Psoas muscle (tissue), 8 donors: ENCODE measurements at regions of chr5 and their contacts with region 1.

Region 1: GRCh38 chr5:140244525-140245025 is 58.3 kb downstream of the PFDN1 start:
- DNase-seq: peak; percentile 91 to 95
- ATAC-seq: peak; percentile 54 to 64 (median 58)
- H3K4me3 ChIP-seq: no peak overlapping the region
- H3K27ac ChIP-seq: peak overlapping the region; percentile 88
- H3K4me1 ChIP-seq: peaks cover 87% of the 10 kb centered on the region
- H3K27me3 ChIP-seq: no peaks in the 10 kb centered on the region
- CTCF ChIP-seq: peak; percentile 92

Region 2: DNA sequence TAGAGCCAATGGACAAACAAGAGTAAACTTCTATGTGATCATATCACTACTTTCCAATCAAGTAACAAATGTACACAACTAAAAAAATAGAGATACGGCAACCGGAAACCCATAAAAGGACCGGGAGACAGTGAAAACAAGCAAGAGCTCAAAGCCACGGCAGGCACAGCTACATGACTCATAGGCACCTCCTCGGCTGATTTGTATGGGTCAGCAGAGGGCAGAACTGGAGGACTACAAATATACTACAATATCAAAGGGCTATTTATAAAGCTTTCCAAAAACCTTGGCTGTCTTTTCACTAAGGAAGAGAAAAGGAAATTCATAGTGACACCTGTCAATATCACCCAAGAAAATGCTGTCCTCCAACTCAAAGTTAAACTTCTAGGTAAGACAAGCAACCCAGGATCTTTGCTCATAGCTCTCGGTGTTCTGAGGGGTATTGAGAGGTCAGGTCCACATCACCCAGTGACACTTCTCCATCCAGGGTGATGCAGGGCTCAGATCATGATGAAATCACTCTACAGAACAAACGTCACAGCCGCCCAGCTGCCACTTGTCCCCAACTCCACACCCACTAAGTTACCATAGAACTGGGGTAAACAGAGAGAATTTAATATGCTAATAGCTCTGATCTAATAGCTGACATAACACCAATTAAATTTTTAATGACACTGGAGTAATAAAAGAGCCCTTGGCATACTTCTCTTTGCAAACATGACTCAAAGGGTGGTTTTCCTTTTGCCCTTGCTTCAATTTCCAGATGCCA is 17.0 kb after region 1 on chr5:
- intact Hi-C with region 1: no loop called
- DNase-seq: peak; percentile 60 to 82
- ATAC-seq: peak; percentile 93 to 97 (median 94)
- H3K4me3 ChIP-seq: peak overlapping the region; percentile 35
- H3K27ac ChIP-seq: peak overlapping the region; percentile 92
- H3K4me1 ChIP-seq: peaks cover 40% of the 10 kb centered on the region
- H3K27me3 ChIP-seq: no peaks in the 10 kb centered on the region
- CTCF ChIP-seq: no peak

Region 3: DNA sequence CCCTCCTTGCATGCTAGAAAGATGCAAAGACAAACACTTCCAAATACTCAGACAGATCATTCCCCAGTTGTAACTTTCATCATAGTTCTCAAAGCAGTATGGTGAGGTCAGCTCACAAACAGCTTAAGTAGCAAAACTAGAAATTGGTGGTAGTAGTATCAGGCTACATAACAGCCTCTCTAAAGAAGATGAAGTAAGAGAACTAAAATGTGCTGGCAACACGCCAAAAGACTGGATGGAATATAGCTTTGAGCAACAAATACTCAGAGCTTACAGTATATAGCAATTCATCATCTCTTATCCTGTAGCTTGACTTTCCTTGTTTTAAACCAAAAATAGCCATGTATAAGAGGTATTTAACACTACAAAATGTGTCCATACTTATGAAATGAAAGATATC is 50.8 kb after region 1 on chr5:
- intact Hi-C with region 1: loop called (anchors 5 to 10 kb)
- DNase-seq: no peak
- ATAC-seq: peak; percentile 94 to 98 (median 97)
- H3K4me3 ChIP-seq: no peak overlapping the region
- H3K27ac ChIP-seq: peak overlapping the region; percentile 83
- H3K4me1 ChIP-seq: peaks cover 81% of the 10 kb centered on the region
- H3K27me3 ChIP-seq: no peaks in the 10 kb centered on the region
- CTCF ChIP-seq: no peak

Region 4: DNA sequence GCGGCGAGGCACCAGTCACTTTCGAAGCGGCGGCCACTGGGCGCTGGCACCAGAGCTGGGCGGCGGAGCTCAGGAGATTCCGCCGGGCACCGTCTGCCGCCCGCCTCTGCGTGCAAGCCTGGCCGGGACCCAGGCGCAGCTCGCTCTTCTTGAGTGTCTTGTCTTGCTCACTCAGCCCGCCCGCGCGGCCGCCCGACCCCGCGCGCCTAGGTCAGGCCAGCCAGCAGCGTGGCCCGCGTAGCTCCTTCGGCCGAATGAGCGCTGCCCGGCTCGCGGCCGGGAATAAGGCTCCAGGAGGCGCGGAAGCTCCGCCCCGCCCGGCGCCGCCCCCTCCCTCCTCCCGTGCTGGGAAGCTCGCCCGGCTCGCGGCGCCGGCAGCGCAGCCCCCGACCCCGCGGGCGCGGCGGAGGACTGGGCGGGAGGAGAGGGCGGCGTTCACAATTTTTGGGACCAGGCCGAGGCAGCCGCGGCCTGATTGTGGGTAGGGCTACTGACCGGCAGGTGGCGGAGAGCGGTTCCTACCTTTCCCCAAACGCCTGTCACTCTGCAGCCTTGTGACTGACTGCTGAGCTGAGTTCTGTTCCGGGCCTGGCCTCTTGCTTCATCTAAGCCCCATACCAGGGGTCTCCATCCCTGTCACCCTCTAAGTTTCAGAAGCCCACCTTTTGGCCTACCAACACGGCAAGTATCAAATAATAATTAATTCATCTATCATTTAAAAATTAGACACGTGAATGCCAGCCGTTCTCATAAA is 102.0 kb after region 1 on chr5 and contains the start of gene HBEGF:
- intact Hi-C with region 1: loop called in 1 of 2 experiments (anchors 5 kb)
- DNase-seq: peak; percentile 82 to 89
- ATAC-seq: peak; percentile 69 to 78 (median 72)
- H3K4me3 ChIP-seq: peak within 1 kb of the TSS; percentile 73
- H3K27ac ChIP-seq: peak within 1 kb of the TSS; percentile 94
- H3K4me1 ChIP-seq: peaks cover 67% of the 10 kb centered on the region
- H3K27me3 ChIP-seq: no peaks in the 10 kb centered on the region
- CTCF ChIP-seq: peak; percentile 57
- total RNA-seq, gene HBEGF: 28.9 to 36.7 (median 34.2) TPM

Region 5: DNA sequence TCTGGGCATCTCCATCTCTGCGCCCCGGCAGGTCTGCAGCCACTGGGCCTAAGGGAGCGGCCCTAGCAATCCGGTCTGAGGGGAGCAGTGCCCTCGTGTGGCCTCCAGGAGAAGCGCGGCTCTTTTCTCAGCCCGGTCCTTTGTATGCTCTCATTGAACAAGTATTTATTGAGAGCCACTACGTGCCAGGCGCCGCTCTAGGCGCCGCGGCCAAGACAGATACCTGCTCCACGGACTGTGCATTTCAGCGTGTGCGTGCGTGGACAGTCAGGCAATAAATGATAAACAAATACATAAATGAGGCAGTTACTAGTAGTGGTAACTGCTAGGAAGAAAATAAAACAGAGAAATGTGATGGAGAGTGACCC is 113.1 kb after region 1 on chr5:
- intact Hi-C with region 1: loop called (anchors 1 to 2 kb)
- DNase-seq: peak; percentile 82 to 88
- ATAC-seq: peak; percentile 94 to 97 (median 94)
- H3K4me3 ChIP-seq: peak overlapping the region; percentile 48
- H3K27ac ChIP-seq: no peak overlapping the region
- H3K4me1 ChIP-seq: peaks cover 5% of the 10 kb centered on the region
- H3K27me3 ChIP-seq: no peaks in the 10 kb centered on the region
- CTCF ChIP-seq: peak; percentile 88

Region 6: DNA sequence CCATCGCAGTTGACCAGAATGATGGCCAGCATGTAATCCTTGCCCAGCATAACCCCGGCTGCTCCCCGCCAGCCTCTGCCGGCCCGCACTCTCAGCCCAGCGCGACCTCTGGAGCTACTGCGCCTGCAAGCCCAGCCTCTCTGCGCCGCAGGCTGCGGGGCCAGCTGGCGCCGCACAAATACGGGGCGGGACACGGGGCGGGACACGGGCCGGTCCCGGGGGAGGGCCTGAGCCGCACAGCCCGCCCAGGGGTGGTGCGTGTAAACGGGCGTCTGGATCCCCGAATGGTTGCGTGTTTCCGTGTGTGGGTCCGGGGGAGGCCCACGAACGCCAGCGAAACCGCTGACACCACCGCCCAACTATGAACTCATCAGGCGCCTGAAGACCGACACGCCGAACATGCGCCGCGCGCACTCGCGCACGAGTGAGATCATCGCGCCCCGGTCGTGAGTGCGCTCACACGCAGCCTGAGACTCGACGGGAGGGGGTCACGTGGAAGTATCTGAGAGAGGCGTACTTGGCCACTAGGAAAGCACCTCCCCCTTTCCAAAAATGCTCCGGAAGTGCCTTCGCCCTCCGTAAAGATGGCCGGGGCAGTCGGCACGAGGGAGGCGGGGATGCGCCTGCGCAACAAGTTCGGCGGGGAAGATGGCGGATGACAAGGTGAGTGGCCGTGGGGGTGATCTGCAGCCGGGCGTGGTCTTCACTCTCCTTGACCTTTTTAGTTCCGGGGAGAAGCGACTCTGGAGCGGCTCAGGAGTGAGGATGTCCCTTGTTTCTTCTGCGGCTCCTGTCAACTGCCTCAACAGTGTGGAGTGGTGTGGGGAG is 319.8 kb after region 1 on chr5 and contains the starts of genes APBB3 and SLC35A4:
- intact Hi-C with region 1: loop called in 1 of 2 experiments (anchors 5 kb)
- DNase-seq: peak; percentile 98 to 99
- ATAC-seq: peak; percentile 89 to 90 (median 90)
- H3K4me3 ChIP-seq: peak within 1 kb of the TSS; percentile 82
- H3K27ac ChIP-seq: peak within 1 kb of the TSS; percentile 97
- H3K4me1 ChIP-seq: peaks cover 68% of the 10 kb centered on the region
- H3K27me3 ChIP-seq: no peaks in the 10 kb centered on the region
- CTCF ChIP-seq: no peak
- total RNA-seq, gene APBB3: 9.5 to 25.4 (median 16.4) TPM
- total RNA-seq, gene SLC35A4: 95.7 to 129 (median 117) TPM

Region 7: GRCh38 chr5:140821375-140822280 is 577.1 kb after region 1 on chr5 and contains the start of gene PCDHA5:
- intact Hi-C with region 1: no loop called
- DNase-seq: no peak
- ATAC-seq: no peak
- H3K4me3 ChIP-seq: no peak within 1 kb of the TSS
- H3K27ac ChIP-seq: no peak within 1 kb of the TSS
- H3K4me1 ChIP-seq: no peaks in the 10 kb centered on the region
- H3K27me3 ChIP-seq: peaks cover 0 to 11% (median 2%) of the 10 kb centered on the region in 3 donors
- CTCF ChIP-seq: peak; percentile 19
- total RNA-seq, gene PCDHA5: not detected